ENCODE measurements at regions of chr5 and their contacts with region 1.

Region 1: GRCh38 chr5:671459-672328 is 21.5 kb downstream of the TPPP start:
- DNase-seq: no peak
- H3K4me3 ChIP-seq: no peak overlapping the region
- H3K27me3 ChIP-seq: peaks cover 4% of the 10 kb centered on the region; the same call in 1 of the 2 replicates
- CTCF ChIP-seq: peak; percentile 97

Region 2: GRCh38 chr5:458547-459353 is 212.9 kb before region 1 on chr5:
- CTCF ChIA-PET with region 1: no interaction called
- POLR2A ChIA-PET with region 1: no interaction called
- DNase-seq: peak; percentile 31
- H3K4me3 ChIP-seq: no peak overlapping the region
- H3K27me3 ChIP-seq: no peaks in the 10 kb centered on the region
- CTCF ChIP-seq: no peak

Region 3: DNA sequence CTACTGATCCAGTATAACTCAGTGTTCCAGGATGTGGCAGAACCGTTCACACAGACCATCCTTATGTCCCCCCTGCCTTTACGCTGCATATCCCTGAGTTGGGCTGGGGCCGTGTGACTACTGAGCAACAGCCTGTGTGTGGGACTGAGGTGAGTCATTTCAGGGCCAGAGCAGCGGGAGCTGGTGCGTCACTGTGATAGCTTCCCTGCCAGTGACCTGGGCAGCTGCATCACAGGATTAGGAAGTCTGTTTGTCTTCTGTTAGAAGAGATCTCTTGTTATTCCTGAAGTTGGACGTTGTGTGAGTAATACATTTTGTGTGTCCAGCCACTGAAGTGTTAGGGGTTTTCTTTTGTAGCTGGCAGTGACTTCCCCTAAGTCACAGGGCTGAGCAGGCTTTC is 14.1 kb before region 1 on chr5:
- CTCF ChIA-PET with region 1: interaction called, 51 read pairs
- POLR2A ChIA-PET with region 1: no interaction called
- DNase-seq: no peak
- H3K4me3 ChIP-seq: no peak overlapping the region
- H3K27me3 ChIP-seq: no peaks in the 10 kb centered on the region
- CTCF ChIP-seq: no peak

Region 4: GRCh38 chr5:757931-758697 is 86.4 kb after region 1 on chr5:
- CTCF ChIA-PET with region 1: no interaction called
- POLR2A ChIA-PET with region 1: no interaction called
- DNase-seq: no peak
- H3K4me3 ChIP-seq: no peak overlapping the region
- H3K27me3 ChIP-seq: peaks cover 4% of the 10 kb centered on the region
- CTCF ChIP-seq: no peak

Region 5: DNA sequence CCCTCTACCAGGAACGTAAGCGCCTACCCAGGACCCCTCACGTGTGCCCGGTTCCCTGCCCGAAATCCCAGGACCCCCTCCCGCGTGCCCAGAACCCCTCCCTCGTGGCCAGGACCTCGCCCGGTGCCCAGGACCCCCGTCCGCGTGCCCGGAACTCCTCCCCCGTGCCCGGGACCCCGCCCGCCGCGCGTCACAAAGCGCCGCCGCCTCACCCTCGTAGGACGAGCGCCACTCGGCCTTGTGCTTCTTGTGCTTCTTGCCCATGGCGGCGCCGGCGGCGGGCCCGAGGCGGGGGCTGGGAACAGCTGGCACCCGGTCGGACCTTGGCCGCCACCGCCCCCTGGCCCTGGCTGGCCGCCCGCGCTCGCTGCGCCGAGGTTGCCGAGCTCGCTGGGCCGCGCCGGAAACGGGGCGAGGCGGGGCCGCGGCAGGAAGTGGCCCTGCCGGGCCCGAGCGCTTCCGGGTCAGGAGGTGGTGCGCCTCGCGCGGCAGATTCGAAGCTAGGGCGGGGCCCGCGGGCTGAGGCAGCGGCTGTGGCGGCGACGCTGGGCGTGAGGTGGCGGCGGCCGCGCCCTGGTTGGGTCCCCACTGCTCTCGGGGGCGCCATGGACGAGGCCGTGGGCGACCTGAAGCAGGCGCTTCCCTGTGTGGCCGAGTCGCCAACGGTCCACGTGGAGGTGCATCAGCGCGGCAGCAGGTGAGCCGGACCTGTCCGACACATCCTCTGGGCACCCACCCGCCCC is 220.9 kb after region 1 on chr5 and contains the starts of genes BRD9 and TRIP13:
- CTCF ChIA-PET with region 1: interaction called, 10 read pairs
- POLR2A ChIA-PET with region 1: no interaction called
- DNase-seq: peak; percentile 4
- H3K4me3 ChIP-seq: peak within 1 kb of the TSS; percentile 96
- H3K27me3 ChIP-seq: no peaks in the 10 kb centered on the region
- CTCF ChIP-seq: no peak
- polyA plus RNA-seq, gene BRD9: 10.8 and 12.3 TPM in 2 replicates
- polyA plus RNA-seq, gene TRIP13: 20.4 and 23.1 TPM in 2 replicates

Region 6: DNA sequence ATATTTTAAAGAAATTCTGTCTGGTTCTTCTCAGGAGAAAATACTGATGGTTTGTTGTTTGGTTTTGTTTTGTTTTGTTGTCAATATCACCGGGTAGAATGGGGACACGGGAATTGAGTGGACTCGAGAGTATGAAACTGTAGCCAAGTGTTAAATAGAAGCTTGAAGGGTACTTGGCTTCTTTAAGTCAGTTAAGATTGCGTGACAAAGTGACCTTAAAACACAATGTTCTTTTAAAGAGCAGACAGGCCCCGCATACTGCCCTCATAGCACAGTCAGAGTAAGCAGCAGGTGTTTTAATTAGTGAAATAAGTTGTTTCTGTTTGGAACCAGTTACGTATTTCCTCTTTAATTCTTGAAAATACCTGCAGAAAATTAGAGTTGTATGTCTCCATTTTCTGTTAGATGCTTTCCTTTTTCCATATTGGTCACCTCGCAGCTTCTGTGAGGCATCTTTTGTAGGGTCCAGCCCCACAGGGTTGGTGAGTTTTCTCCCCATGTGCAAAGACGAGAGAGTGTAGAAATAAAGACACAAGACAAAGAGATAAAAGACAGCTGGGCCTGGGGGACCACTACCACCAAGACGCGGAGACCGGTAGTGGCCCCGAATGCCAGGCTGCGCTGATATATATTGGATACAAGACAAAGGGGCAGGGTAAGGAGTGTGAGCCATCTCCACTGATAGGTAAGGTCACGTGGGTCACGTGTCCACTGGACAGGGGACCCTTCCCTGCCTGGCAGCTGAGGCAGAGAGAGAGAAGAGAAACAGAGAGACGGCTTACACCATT is 230.6 kb after region 1 on chr5:
- CTCF ChIA-PET with region 1: interaction called, 102 read pairs
- POLR2A ChIA-PET with region 1: no interaction called
- DNase-seq: no peak
- H3K4me3 ChIP-seq: no peak overlapping the region
- H3K27me3 ChIP-seq: no peaks in the 10 kb centered on the region
- CTCF ChIP-seq: no peak

Measured in BJ (cell line).